A549 (cell line): ENCODE measurements at regions of chr12 and their contacts with region 1.

Region 1: DNA sequence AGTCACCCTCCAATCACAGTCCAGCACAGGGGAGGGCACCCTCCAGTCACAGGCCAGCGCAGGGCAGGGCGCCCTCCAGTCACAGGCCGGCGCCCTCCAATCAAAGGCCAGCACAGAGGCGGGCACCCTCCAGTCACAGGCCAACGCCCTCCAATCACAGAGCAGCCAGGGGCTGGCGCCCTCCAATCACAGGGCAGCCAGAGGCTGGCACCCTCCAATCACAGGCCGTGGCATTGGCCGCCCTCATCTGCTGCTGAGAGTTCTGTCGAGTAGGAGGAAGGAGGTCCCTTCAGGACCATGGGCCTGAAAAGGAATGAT is 26.6 kb downstream of the DDX51 start:
- DNase-seq: peak; percentile 11 to 64
- ATAC-seq: peak; percentile 47 to 91; a peak in 4 of 6 replicates
- H3K4me3 ChIP-seq: no peak overlapping the region
- H3K27ac ChIP-seq: no peak overlapping the region
- H3K4me1 ChIP-seq: no peaks in the 10 kb centered on the region
- CTCF ChIP-seq: no peak
- EP300 ChIP-seq: no peak
- POLR2A ChIP-seq: no peak
- RAD21 ChIP-seq: no peak

Region 2: DNA sequence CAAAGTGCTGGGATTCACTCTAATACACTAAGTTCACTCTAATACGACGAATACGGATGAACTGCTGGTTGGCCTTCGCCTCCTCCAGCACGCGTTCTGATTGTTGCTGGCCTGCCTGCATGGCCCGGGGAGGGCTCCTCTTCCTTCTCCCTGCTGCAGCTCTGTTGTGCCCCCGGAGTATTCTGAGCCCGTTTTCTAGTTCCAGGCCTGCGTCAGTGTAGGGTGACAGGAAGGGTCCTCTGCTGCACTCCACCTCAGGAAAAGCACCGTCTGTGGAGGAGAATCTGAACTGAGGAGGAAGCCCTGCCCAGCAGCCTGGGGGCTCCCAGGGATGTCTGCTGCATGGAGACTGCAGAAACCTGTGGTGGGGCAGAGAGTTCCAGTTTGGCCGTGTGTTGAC is 17.8 kb before region 1 on chr12:
- CTCF ChIA-PET with region 1: no interaction called
- POLR2A ChIA-PET with region 1: interaction called, 11 read pairs
- DNase-seq: no peak
- ATAC-seq: no peak
- H3K4me3 ChIP-seq: no peak overlapping the region
- H3K27ac ChIP-seq: no peak overlapping the region
- H3K4me1 ChIP-seq: no peaks in the 10 kb centered on the region
- CTCF ChIP-seq: no peak
- EP300 ChIP-seq: no peak
- POLR2A ChIP-seq: no peak
- RAD21 ChIP-seq: no peak